PC-9 (cell line): ENCODE measurements at regions of chr5 and their contacts with region 1.

Region 1: DNA sequence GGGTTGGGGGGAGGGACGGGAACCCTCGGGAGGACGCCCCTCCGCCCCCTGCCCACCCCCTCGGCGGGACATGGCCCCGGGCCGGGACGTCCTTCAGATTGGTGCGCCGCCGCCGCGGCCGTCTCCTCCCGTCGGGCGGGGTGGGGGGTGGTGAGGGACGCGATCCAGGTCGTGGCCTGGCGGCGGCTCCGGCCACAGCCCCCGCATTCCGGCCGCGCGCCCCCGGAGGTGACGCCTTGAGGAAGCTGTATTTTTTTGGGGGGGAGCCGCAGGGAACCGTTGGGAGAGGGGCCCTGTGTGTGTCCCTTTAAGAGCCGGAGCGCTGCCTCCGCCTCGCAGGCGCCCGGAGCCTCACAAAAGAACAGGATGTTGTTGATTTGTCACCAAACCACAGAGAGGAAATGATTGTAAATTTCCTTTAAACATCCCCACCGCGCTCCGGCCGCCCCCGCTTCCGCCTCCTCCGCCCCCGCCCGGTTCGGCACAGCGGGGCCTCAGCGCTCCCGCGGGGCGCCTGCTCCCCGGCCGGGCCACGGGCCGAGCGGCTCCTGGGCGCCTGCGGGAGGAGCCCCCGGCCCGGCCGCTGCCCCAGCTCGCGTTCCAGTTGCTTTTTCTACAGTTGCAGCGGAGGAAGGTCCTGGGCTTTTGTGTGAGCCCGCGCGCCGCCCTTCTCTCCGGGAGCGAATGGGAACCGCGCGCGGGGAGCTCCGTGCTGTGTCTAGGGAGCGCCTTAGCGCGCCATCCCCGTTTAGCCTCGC is 32.1 kb upstream of the SPRY4 start:
- DNase-seq: peak; percentile 81 to 87
- H3K4me3 ChIP-seq: peak overlapping the region; percentile 65; the same call in 1 of the 2 replicates
- H3K27ac ChIP-seq: peak overlapping the region; percentile 93
- H3K4me1 ChIP-seq: peaks cover 68% of the 10 kb centered on the region
- H3K27me3 ChIP-seq: no peaks in the 10 kb centered on the region
- CTCF ChIP-seq: no peak

Region 2: GRCh38 chr5:142206801-142207200 is 150.1 kb before region 1 on chr5:
- CTCF ChIA-PET with region 1: no interaction called
- POLR2A ChIA-PET with region 1: interaction called, 11 read pairs
- intact Hi-C with region 1: no loop called
- DNase-seq: no peak
- H3K4me3 ChIP-seq: no peak overlapping the region
- H3K27ac ChIP-seq: no peak overlapping the region
- H3K4me1 ChIP-seq: peaks cover 2% of the 10 kb centered on the region; the same call in 1 of the 2 replicates
- H3K27me3 ChIP-seq: no peaks in the 10 kb centered on the region
- CTCF ChIP-seq: peak; percentile 45